Posterior vena cava (tissue), 2 donors: ENCODE measurements at regions of chr1 and their contacts with region 1.

Region 1: DNA sequence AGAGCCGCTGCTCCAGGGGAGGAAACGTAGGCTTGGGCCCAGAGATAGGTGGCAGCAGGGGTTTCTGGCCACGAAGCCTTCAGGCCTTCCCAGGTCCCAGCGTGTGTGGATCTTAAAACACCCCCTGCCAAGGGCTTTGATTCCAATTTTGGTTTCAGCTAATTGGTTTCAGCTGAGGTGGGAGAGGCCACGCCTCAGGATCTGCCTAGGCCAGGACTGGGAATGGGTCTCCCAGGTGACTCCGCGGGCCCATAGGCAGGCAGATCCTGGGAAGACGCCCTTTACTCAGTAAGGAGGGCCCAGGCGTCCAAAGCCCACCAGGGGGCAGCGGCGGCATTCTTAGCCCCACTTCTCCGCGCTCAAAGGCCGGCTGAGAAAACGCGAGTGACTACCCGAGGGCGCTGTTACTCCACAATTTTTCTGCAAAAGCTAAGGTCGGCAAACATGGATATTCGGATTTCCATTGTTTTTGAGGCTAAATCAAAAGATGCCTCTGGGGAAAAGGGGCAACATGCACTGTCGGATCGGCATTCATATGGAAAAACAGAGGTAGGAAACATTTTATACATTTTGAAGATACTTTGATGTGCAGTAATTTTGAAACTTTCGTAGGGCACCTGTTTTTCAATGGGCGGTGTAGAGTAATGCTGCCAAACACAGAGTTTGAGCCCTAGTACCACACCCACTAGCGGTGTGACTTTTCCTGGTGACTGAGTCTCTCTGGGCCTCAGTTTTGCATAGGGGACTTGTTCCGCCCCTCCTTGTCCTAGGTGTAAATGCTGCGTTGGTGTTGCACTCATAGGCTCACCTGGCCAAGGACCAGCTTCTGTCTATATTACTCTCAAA is 31.8 kb upstream of the BCL10 start:
- DNase-seq: peak; percentile 96

Region 2: DNA sequence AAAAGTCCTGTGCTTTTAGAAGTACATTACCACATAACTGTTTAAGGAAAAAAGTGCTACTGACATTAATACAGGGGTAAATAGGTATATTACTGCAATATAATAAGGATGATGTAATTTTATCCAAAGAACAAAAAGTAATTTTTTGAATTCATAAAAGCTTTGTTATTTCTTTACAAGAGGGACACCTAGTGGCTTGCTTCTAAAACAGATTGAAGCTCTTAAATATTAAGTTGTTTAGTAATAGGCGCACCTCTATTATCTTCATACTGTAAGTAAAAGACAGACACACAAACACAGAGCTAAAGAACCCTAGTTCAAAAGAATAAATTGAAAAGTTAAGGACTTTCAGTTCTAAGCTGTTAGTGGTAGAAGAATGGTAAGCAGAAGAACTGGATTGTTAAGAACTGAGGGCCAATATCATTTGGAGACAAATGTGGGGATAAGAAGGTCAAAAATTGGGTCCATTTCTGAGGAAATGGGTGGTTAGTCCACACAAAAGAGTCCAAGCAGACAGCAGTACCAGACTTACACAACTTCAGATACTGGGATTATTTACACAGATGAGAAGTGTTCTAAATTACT is 384.6 kb after region 1 on chr1:
- intact Hi-C with region 1: loop called (anchors 5 kb)
- DNase-seq: no peak